ENCODE measurements at regions of chr10 and their contacts with region 1.

Region 1: DNA sequence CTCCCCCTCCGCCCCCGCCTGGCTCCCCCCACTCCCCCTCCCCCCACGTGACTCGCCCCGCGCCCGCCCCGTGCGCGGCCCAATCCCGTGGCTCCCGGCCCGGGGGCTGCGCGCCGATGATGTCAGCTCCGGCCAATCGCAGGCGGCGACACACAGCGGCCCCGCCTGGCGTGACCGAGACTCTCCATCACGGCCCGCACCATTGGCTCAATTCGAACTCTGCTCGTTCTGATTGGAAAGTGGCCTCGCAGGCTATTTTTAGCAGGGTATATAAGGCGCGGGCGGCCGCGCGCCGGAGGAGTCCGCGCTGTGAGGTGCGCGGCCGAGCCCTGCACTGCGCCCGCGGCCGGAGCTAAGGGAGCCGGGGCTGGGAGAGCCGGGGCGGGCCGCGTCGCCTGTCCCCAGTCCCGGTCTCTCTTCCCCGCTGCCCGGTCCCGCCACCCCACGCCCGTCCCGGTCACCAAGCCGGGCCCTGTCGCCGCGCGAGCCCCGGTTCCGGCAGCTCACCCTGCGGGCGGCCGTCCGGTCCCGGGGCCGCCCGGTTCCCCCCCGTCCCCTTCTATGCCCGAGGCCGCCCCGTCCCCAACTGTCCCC is 345 bp upstream of the KLF6 start:
- DNase-seq: peak; percentile 99

Region 2: GRCh38 chr10:3239066-3239919 is 546.1 kb before region 1 on chr10:
- intact Hi-C with region 1: loop called (anchors 5 kb)
- DNase-seq: peak; percentile 91

Region 3: DNA sequence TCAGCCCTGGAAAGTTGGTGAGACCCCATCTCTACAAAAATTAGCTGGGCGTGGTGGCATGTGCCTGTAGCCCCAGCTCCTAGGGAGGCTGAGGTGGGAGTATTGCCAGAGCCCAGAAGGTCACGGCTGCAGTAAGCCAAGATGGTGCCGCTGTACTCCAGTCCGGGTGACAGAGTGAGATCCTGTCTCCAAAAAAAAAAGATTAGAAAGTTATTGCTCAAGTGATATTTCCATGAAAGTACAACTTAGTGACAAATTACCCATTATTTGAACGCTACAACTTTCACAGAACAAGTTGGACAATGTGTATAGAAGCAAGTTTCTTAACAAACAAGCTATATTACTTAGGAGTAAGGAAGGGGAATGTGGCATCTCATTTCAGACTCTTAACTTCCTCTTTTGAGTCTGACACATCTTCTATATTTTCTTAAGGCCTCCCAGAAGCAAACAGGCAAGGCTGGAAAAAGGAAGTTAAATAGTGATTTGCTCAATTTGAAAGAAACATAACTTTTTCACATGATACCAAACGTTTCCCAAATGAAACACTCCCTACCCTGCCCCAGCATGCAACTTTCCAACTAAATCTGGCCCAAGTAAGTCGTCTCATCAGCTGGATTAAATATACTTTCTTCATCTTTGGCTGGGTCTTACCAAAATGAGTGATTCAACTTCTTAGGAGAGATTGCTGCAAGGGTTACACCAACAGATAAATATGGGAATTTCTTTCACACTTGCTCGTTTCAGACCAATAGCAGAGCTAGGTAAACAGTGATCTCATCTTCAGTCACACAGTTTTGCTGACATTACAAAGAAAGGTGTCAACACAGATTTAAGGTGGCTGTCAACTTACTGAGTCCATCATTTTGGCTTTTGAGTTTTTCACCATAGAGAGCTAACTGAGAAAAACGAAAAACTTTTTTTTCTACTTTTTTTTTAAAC is 65.9 kb after region 1 on chr10:
- intact Hi-C with region 1: loop called (anchors 2 kb)
- DNase-seq: no peak

Region 4: GRCh38 chr10:4195213-4195612 is 409.9 kb after region 1 on chr10:
- intact Hi-C with region 1: loop called (anchors 5 kb)
- DNase-seq: no peak

Region 5: DNA sequence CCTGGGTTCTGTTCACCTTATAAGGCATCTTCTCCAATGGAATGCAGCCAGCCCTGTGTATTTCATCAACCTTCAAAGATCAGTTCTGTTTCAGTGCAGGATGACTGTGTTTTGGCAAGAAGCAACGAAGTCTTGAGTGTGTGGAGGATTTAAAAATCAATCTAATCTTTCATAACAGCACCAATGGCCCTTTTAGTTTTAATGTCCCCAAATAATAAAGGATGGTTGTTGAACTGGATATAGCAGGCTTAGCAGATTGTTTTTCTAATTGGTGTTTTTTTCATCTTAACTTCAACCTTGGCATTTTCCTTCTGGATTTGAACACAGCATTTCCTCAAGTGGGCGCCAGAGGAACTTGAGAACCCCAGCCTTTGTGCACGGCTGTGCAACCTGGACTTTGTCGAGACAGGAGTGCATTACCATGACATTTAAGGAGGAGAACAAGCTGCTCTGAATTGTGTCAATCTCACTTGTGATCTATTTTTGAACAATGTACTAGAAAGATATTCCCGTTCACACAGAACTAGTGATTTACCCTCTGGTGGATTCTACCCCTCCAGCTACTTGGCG is 727.4 kb after region 1 on chr10:
- intact Hi-C with region 1: loop called (anchors 5 kb)
- DNase-seq: peak; percentile 78